MCF 10A (cell line): ENCODE measurements at regions of chr14 and their contacts with region 1.

Region 1: DNA sequence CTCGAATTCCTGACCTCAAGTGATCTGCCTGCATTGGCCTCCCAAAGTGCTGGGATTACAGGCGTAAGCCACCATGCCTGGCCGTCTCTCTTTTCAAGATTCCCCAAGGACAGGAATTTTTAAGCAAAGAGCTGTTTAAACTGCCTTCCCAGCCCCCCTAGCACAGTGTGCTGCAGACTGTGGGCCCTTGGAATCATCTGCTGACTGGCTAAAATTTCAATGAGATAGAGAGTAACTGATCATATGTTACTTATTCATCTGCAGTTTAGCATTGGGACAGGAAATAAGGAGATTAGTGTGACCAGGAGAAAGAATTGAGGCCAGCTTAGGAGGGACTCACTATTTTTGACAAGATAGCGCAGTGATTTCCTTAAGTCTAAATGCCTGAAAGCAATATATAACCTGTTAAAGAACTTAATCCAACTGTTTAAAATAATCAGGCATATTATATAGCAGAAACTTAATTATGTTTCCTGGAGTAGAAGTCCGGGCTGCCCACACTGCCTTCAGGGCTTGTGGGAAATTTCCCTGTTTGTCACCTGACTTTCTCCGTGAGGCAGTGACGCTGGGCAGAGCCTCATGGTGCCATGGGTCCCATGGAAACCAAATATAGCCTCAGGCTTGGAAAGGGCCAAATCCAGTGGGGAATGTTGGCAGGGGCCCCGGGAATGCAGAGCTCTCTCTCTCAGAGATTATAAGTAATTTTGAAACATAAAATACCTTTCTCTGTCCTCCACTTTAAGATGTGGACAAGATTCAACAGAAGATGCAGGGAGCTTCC is 22.8 kb upstream of the CEBPE start:
- DNase-seq: peak; percentile 83
- H3K4me3 Mint-ChIP-seq: no peak overlapping the region
- H3K27ac Mint-ChIP-seq: peak overlapping the region; percentile 83
- H3K4me1 Mint-ChIP-seq: peaks cover 59% of the 10 kb centered on the region
- H3K27me3 Mint-ChIP-seq: no peaks in the 10 kb centered on the region
- CTCF ChIP-seq: no peak

Region 2: DNA sequence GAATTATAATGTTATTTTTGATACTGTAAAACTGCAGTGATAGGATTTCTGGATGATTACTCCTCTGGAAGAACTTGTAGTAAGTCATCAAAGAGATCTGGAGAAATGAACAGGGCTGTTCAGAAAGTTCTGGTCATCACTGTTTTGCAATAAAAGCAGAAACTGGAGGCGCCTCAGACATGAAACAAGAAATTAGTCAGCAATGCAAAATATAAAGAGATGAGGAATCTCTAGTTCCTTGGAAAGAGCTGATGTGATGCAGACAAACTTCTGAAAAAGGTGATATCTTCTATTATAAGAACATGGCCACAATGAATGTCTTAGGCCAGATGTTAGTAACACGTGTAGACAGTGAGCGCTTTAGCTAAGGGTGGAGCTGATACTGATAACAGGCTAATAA is 56.4 kb before region 1 on chr14:
- CTCF ChIA-PET with region 1: no interaction called
- POLR2A ChIA-PET with region 1: no interaction called
- intact Hi-C with region 1: no loop called
- DNase-seq: no peak
- H3K4me3 Mint-ChIP-seq: no peak overlapping the region
- H3K27ac Mint-ChIP-seq: no peak overlapping the region
- H3K4me1 Mint-ChIP-seq: peaks cover 11% of the 10 kb centered on the region
- H3K27me3 Mint-ChIP-seq: no peaks in the 10 kb centered on the region
- CTCF ChIP-seq: no peak

Region 3: DNA sequence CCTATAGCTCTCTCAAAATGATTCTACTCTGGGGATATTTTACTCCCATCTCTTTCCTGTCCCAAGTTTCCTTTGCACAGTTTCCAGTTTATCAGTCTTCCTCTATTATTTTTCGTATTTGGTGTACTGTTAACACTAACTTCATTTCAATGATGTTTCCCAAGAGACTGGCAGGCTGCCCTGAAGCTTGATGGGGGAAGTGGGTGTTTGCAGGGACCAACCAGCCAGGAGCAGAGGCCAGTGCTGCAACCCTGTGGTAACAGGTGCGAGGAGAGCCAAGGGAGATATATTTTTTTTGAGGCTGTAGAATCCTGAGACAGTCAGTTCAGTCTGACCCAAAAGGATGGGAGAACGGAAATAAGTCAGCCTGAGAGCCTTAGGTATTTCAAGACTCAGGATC is 11.0 kb before region 1 on chr14:
- CTCF ChIA-PET with region 1: interaction called, 3 read pairs
- POLR2A ChIA-PET with region 1: interaction called, 11 read pairs
- intact Hi-C with region 1: no loop called
- DNase-seq: peak; percentile 74
- H3K4me3 Mint-ChIP-seq: no peak overlapping the region
- H3K27ac Mint-ChIP-seq: no peak overlapping the region
- H3K4me1 Mint-ChIP-seq: peaks cover 26% of the 10 kb centered on the region
- H3K27me3 Mint-ChIP-seq: no peaks in the 10 kb centered on the region
- CTCF ChIP-seq: no peak

Region 4: DNA sequence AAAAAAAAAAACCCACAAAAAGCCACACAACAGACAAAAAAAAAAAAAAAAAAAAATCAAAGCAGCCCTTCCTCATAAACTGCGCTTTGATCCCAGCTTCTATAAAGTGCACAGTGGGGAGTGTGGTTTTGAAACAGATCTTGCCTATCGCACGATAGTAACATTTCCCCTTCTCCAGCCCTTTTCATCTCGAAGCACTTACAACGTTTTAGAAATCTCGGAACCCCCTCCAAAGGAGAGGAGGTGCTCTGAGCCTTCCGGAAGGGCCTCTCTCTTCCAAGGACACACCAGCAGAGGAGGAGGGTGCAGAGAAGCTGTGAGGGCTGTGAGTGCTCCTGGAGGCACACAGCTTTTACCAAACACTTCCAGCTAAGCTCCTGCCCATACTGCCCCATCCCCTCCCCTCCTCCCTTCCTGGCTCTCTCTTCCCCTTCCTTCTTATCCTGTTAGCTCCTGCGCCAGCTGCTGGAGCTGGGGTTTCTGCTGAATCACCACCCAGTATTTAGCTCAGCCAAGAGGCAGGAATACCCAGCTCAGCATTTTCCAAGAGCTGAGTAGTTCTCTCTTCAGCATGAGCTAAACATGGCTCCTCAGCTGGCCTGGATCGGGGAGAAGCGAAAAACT is 13.2 kb after region 1 on chr14:
- CTCF ChIA-PET with region 1: interaction called, 10 read pairs
- POLR2A ChIA-PET with region 1: interaction called, 32 read pairs
- intact Hi-C with region 1: no loop called
- DNase-seq: peak; percentile 64
- H3K4me3 Mint-ChIP-seq: peak overlapping the region; percentile 52
- H3K27ac Mint-ChIP-seq: peak overlapping the region; percentile 49
- H3K4me1 Mint-ChIP-seq: peaks cover 37% of the 10 kb centered on the region
- H3K27me3 Mint-ChIP-seq: no peaks in the 10 kb centered on the region
- CTCF ChIP-seq: no peak

Region 5: GRCh38 chr14:23160924-23161538 is 19.2 kb after region 1 on chr14:
- CTCF ChIA-PET with region 1: interaction called, 10 read pairs
- POLR2A ChIA-PET with region 1: interaction called, 32 read pairs
- intact Hi-C with region 1: no loop called
- DNase-seq: peak; percentile 82
- H3K4me3 Mint-ChIP-seq: peak overlapping the region; percentile 37
- H3K27ac Mint-ChIP-seq: no peak overlapping the region
- H3K4me1 Mint-ChIP-seq: peaks cover 19% of the 10 kb centered on the region
- H3K27me3 Mint-ChIP-seq: no peaks in the 10 kb centered on the region
- CTCF ChIP-seq: no peak

Region 6: GRCh38 chr14:23174276-23175184 is 32.7 kb after region 1 on chr14:
- CTCF ChIA-PET with region 1: interaction called, 12 read pairs
- POLR2A ChIA-PET with region 1: interaction called, 17 read pairs
- intact Hi-C with region 1: no loop called
- DNase-seq: peak; percentile 65
- H3K4me3 Mint-ChIP-seq: no peak overlapping the region
- H3K27ac Mint-ChIP-seq: no peak overlapping the region
- H3K4me1 Mint-ChIP-seq: peaks cover 39% of the 10 kb centered on the region
- H3K27me3 Mint-ChIP-seq: no peaks in the 10 kb centered on the region
- CTCF ChIP-seq: no peak